Endothelial cell of umbilical vein (primary cell): ENCODE measurements at regions of chrX and their contacts with region 1.

Region 1: GRCh38 chrX:151825927-151826481 is 86.7 kb upstream of the MAGEA4 start:
- DNase-seq: peak; percentile 52
- H3K4me3 ChIP-seq: no peak overlapping the region
- H3K27ac ChIP-seq: no peak overlapping the region
- H3K4me1 ChIP-seq: no peaks in the 10 kb centered on the region
- H3K27me3 ChIP-seq: no peaks in the 10 kb centered on the region
- CTCF ChIP-seq: no peak
- POLR2A ChIP-seq: no peak

Region 2: GRCh38 chrX:151974336-151975227 is 148.6 kb after region 1 on chrX and contains the start of gene GABRE:
- CTCF ChIA-PET with region 1: interaction called, 15 read pairs
- POLR2A ChIA-PET with region 1: interaction called, 3 read pairs
- dilution Hi-C with region 1: no loop called
- intact Hi-C with region 1: no loop called
- DNase-seq: peak; percentile 61
- H3K4me3 ChIP-seq: peak within 1 kb of the TSS; percentile 41 to 67 (median 48)
- H3K27ac ChIP-seq: peak within 1 kb of the TSS; percentile 30
- H3K4me1 ChIP-seq: peaks cover 19% of the 10 kb centered on the region
- H3K27me3 ChIP-seq: no peaks in the 10 kb centered on the region
- CTCF ChIP-seq: no peak
- POLR2A ChIP-seq: peak; percentile 68
- total RNA-seq, gene GABRE: 6.1 and 20.2 TPM in 2 replicates

Region 3: GRCh38 chrX:151984328-151984727 is 158.3 kb after region 1 on chrX:
- CTCF ChIA-PET with region 1: interaction called, 7 read pairs
- POLR2A ChIA-PET with region 1: no interaction called
- dilution Hi-C with region 1: no loop called
- intact Hi-C with region 1: loop called (anchors 2 kb)
- DNase-seq: peak; percentile 94
- H3K4me3 ChIP-seq: no peak overlapping the region
- H3K27ac ChIP-seq: peak overlapping the region; percentile 99
- H3K4me1 ChIP-seq: peaks cover 56% of the 10 kb centered on the region
- H3K27me3 ChIP-seq: no peaks in the 10 kb centered on the region
- CTCF ChIP-seq: no peak
- POLR2A ChIP-seq: no peak

Region 4: GRCh38 chrX:152632445-152633097 is 806.6 kb after region 1 on chrX:
- CTCF ChIA-PET with region 1: interaction called, 47 read pairs
- POLR2A ChIA-PET with region 1: no interaction called
- dilution Hi-C with region 1: no loop called
- intact Hi-C with region 1: loop called (anchors 1 kb)
- DNase-seq: peak; percentile 37
- H3K4me3 ChIP-seq: no peak overlapping the region
- H3K27ac ChIP-seq: no peak overlapping the region
- H3K4me1 ChIP-seq: no peaks in the 10 kb centered on the region
- H3K27me3 ChIP-seq: peaks cover 6 to 7% of the 10 kb centered on the region in 2 experiments
- CTCF ChIP-seq: peak; percentile 58 to 63
- POLR2A ChIP-seq: no peak